ENCODE measurements at regions of chr2 and their contacts with region 1.

Region 1: DNA sequence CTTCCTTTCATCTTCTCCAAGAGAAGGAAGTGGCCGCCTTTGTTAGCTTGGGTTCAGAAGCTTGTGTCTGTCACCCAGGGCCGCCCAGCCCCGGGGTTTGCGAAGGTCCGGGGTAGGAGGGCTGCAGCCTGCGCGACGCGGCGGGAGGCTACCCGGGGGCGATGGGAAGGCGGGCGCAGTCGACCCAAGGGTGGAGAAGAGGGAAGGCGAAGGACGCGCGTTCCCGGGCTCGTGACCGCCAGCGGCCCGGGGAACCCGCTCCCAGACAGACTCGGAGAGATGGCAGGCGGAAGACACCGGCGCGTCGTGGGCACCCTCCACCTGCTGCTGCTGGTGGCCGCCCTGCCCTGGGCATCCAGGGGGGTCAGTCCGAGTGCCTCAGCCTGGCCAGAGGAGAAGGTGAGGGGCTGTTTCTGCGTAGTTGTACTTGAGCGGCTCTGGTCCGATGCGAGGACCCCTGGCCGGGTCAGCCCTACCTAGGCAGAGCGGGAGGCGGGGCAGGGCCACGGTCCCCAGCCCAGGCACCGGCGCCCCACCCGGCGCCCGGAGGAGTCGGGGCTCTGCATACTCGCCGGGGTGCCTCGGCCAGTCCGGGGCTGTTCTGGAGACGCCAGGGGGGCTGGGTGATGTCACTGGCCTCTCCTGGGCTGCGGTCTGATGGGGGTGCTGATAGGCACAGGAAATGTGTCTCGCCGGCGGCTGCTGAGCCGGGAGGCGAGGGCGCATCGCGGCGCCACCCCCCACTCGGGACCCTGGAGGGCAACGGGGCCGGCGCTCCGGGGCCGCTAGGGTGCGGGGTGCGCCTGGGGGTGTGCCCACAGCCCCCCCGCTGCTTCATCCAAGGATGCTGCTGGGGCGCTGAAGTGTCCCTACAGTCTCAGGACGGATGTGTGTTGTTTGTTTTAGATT is at the start of gene QPCT:
- DNase-seq: peak; percentile 64
- ATAC-seq: peak; percentile 80
- H3K4me3 Mint-ChIP-seq: peak within 1 kb of the TSS; percentile 66
- H3K27ac Mint-ChIP-seq: no peak within 1 kb of the TSS
- H3K4me1 Mint-ChIP-seq: peaks cover 15% of the 10 kb centered on the region
- H3K27me3 Mint-ChIP-seq: peaks cover 45% of the 10 kb centered on the region
- total RNA-seq, gene QPCT: 0.51 to 0.64 TPM

Region 2: DNA sequence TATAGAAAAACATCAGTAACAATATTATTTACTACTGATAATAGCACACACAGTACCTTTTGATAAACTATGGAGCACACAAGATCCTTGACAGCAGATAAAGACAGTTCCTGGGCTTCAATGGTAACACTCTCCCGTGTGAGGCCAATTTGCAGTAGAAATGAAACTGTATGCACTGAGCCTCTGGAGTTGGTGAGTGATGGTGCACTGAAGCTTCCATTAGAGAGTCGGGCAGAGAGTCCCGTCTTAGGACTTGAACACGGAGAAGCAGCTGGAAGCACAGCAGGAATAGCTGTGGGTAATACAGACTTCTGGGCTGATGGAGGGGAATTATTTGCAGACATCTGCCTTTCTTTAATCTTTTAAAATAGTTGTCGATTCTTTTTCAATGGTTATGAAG is 28.5 kb before region 1 on chr2:
- CTCF ChIA-PET with region 1: no interaction called
- POLR2A ChIA-PET with region 1: no interaction called
- intact Hi-C with region 1: no loop called
- DNase-seq: no peak
- ATAC-seq: no peak
- H3K4me3 Mint-ChIP-seq: no peak overlapping the region
- H3K27ac Mint-ChIP-seq: no peak overlapping the region
- H3K4me1 Mint-ChIP-seq: peaks cover 58% of the 10 kb centered on the region
- H3K27me3 Mint-ChIP-seq: no peaks in the 10 kb centered on the region

Region 3: DNA sequence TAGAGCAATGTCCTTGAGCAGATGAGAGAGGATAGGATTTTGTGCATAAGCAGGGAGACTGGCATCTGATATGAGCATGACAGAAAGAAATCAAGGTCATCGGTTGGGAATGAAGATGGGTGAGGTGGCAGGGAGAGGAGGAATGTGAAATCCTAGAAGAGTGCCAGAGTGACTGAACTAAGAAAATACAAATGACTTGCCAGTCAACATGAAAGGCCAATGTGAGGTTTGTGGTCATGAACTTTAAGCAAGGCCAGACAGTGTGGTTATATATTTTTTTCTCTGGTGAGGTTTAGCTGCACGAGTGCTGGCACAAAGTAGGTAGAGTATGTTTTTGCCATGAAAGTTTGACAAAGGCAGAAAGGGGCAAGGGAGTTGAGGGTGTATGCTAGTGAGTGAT is 21.0 kb after region 1 on chr2:
- CTCF ChIA-PET with region 1: interaction called, 4 read pairs
- POLR2A ChIA-PET with region 1: no interaction called
- intact Hi-C with region 1: loop called in 1 of 2 experiments (anchors 2 kb)
- DNase-seq: peak; percentile 28
- ATAC-seq: peak; percentile 66
- H3K4me3 Mint-ChIP-seq: no peak overlapping the region
- H3K27ac Mint-ChIP-seq: no peak overlapping the region
- H3K4me1 Mint-ChIP-seq: no peaks in the 10 kb centered on the region
- H3K27me3 Mint-ChIP-seq: peaks cover 33% of the 10 kb centered on the region

Region 4: DNA sequence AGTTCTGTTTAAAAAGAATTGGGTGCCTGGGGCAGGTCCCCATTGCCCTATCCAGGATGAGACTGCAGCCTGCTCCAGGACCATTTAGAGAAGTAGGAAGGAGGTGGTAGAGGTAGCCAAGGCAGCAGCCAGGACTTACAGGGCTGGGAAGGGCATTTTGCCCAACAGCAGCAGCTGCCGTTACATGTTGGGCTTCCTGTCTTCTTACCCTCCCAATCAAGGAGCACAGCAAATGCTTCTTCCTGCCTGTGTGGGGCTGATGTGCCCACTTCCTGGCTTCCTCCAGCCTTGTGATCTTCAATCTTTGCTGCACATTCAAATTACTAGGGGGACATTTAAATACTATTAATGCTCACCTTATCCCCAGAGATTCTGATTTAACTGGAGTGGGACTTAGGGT is 111.8 kb after region 1 on chr2:
- CTCF ChIA-PET with region 1: no interaction called
- POLR2A ChIA-PET with region 1: no interaction called
- intact Hi-C with region 1: no loop called
- DNase-seq: peak; percentile 34
- ATAC-seq: peak; percentile 43
- H3K4me3 Mint-ChIP-seq: no peak overlapping the region
- H3K27ac Mint-ChIP-seq: peak overlapping the region; percentile 68
- H3K4me1 Mint-ChIP-seq: peaks cover 59% of the 10 kb centered on the region
- H3K27me3 Mint-ChIP-seq: no peaks in the 10 kb centered on the region